GM18951 (cell line): ENCODE measurements at regions of chr14 and their contacts with region 1.

Region 1: DNA sequence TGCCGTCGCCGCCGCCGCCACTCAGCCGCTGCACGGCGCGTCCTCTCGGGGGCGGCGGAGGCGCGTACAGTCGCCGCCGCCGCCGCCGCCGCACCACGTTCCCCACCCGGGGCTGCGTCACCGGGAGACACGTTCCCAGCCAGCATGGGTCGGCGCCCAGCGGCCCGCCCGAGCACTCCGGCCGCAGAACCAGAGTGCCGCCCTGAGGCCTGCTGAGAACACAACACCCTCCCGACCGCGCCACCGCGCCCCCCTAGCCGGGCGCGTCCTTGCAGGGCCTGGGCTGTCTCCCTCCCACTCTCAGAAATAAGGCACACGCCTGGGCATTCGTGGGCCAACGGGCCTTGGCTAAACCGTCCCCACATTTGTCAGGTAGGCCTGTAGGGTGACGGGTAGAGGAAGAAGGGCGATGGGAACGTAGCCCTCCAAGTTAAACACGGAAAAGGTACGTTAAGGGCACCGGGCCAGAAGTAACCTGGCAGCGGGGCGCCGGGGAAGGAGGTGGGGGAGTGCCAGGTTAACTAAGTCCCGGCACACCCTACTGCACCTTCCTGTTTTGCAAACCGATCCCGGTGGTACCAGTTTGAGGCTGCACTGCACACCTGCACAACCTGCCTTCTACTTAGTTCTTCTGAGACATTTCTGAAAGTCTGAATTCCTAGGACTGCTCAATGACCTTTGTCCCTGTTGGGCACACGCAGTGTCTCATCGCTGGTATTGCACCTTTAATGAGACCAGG is at the start of gene MAP4K5:
- POLR2A ChIP-seq: peak; percentile 66

Region 2: GRCh38 chr14:49852301-49853157 is 680.1 kb before region 1 on chr14 and contains the start of gene NEMF:
- in situ Hi-C with region 1: loop called (anchors 25 kb)
- POLR2A ChIP-seq: peak; percentile 82

Region 3: DNA sequence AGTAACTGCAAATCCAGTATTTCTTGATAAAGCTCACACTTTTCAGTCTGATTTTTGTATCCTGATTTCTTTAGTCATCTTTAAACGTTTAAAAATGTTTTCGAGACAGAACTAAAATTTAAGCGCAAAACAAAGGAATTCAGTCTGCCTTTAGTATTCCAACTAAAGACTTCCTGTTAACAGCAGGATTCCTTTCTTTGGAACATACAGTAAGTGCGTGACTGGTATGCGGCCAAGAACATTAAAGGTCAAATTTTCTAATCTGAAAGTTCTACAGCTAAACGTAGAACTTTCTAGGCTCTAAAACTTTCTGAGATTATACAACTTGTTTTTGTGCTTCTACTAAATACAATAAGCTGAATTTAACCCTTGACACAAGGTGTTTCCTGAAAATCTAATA is 125.5 kb after region 1 on chr14:
- in situ Hi-C with region 1: no loop called
- POLR2A ChIP-seq: no peak